Prostate gland (tissue), 2 donors: ENCODE measurements at regions of chr4 and their contacts with region 1.

Region 1: GRCh38 chr4:105191621-105192210 is 45.0 kb downstream of the TET2 start:
- DNase-seq: no peak
- H3K4me3 ChIP-seq: no peak overlapping the region
- H3K27ac ChIP-seq: no peak overlapping the region
- H3K4me1 ChIP-seq: no peaks in the 10 kb centered on the region
- H3K27me3 ChIP-seq: no peaks in the 10 kb centered on the region
- CTCF ChIP-seq: no peak
- POLR2A ChIP-seq: no peak

Region 2: GRCh38 chr4:105146276-105147015 is 45.3 kb before region 1 on chr4 and contains the start of gene TET2:
- intact Hi-C with region 1: loop called (anchors 5 kb)
- DNase-seq: peak; percentile 79
- H3K4me3 ChIP-seq: peak within 1 kb of the TSS; percentile 76 to 82
- H3K27ac ChIP-seq: peak within 1 kb of the TSS; percentile 85 to 88
- H3K4me1 ChIP-seq: no peaks in the 10 kb centered on the region
- H3K27me3 ChIP-seq: no peaks in the 10 kb centered on the region
- CTCF ChIP-seq: no peak
- POLR2A ChIP-seq: peak; percentile 88
- total RNA-seq, gene TET2: 19.8 to 20.6 TPM